B cell (primary cell): ENCODE measurements at regions of chr19 and their contacts with region 1.

Region 1: DNA sequence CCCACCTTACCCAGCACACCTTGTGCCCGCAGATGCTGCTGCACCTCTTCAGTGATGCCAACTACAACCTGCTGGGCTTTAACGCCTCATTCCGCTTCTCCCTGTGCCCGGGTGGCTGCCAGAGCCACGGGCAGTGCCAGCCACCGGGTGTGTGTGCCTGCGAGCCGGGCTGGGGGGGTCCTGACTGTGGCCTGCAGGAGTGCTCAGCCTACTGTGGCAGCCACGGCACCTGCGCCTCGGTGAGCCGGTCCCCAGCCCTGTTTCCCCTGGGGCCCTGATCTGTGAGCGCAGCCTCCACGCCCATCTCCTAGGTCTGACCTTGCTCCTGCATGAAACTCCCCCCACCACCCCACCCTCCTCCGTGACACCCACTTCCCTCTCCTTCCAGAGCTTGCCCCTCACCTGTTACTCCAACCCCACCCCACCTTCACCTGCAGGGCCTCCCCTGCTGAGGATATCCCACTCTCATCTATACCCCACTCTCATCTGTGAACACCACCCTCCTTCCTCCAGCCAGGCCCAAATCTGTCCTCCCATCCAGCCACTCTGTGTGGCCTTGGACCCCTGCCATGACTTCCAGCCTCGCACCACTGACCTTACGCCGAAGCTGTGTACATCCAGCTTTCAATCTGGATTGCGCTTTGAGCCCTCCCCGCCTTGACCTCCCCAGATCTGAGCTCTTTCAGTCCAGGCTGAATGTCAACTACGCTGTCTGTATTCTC is 8.7 kb downstream of the MEGF8 start:
- DNase-seq: peak; percentile 14
- ATAC-seq: peak; percentile 43
- H3K4me3 ChIP-seq: no peak overlapping the region
- H3K4me3 Mint-ChIP-seq: no peak overlapping the region
- H3K27ac ChIP-seq: no peak overlapping the region
- H3K27ac Mint-ChIP-seq: no peak overlapping the region
- H3K4me1 ChIP-seq: no peaks in the 10 kb centered on the region
- H3K4me1 Mint-ChIP-seq: peaks cover 4% of the 10 kb centered on the region
- H3K27me3 ChIP-seq: no peaks in the 10 kb centered on the region
- H3K27me3 Mint-ChIP-seq: no peaks in the 10 kb centered on the region
- CTCF ChIP-seq: no peak

Region 2: GRCh38 chr19:42311657-42312056 is 22.5 kb before region 1 on chr19:
- CTCF ChIA-PET with region 1: no interaction called
- POLR2A ChIA-PET with region 1: interaction called, 10 read pairs
- intact Hi-C with region 1: no loop called
- DNase-seq: no peak
- ATAC-seq: no peak
- H3K4me3 ChIP-seq: no peak overlapping the region
- H3K4me3 Mint-ChIP-seq: no peak overlapping the region
- H3K27ac ChIP-seq: no peak overlapping the region
- H3K27ac Mint-ChIP-seq: no peak overlapping the region
- H3K4me1 ChIP-seq: peaks cover 14 to 19% of the 10 kb centered on the region in 2 donors
- H3K4me1 Mint-ChIP-seq: peaks cover 11% of the 10 kb centered on the region
- H3K27me3 ChIP-seq: peaks cover 0 to 40% (median 17%) of the 10 kb centered on the region in 4 experiments
- H3K27me3 Mint-ChIP-seq: peaks cover 28% of the 10 kb centered on the region
- CTCF ChIP-seq: no peak